ENCODE measurements at regions of chr6 and their contacts with region 1.

Region 1: DNA sequence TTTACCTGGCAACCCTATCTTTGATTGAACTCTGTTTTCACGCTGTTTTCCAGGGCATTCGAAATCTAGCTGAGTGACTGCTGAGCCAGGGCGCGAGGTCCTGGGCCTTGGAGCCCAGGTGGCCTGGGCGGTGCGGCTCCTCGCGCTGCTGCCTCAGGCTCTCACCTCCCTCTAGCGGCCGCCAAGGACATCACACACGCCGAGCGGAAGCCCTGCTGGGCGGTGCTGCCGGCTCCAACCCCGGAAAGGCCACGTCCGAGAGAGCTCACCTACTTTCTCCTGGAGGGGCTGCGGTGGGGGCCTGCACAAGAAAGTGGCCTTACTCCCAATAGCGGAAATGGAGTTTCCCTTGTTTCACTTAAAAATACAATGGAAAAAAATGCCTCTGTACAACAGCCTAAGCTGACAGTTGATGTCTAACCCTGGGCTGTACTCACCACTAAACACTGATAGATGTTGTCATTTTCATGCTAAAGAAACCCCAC is 77.7 kb downstream of the ELOVL4 start:
- DNase-seq: peak; percentile 89
- H3K4me3 Mint-ChIP-seq: peak overlapping the region; percentile 30
- H3K27ac Mint-ChIP-seq: no peak overlapping the region
- H3K4me1 Mint-ChIP-seq: peaks cover 16% of the 10 kb centered on the region
- H3K27me3 Mint-ChIP-seq: peaks cover 8% of the 10 kb centered on the region
- CTCF ChIP-seq: peak; percentile 88

Region 2: DNA sequence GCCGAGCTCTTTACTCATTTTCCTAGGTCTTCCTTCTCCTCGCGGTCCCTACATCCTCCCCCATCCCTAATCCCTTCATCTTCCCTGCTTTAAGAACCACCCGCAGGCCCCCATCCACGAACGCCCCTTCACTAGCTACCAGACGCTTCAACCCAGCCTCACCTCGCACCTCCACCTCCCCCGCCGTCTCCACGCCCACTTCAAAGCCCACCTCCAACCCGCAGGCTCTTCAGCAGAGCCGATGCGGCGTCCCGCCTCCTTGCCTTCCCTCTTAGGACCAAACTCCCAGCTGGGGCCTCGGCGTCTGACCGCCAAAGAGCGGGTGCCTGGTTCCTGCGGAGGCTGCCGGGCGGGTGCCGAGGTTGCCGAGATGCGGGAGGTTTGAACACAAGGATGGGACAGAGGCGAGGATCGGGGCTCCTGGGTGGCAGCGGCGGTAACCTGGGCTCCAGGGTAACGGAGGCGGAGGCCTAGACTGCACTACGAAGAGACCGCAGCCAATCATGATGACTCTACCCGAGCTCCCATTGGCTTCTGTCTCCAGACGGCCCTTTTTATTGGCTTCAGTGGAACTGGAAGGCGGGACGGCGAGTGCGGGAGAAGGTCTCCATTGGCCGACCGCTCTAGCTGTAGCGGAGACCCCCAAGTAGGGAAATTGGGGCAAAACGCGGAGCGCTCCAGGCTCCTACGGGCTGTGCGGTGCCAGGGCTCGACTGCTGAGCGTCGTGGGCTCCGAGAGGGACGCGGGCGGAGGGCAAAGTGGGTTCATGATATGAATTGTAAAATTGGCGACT is 332.5 kb before region 1 on chr6 and contains the start of gene LCA5:
- CTCF ChIA-PET with region 1: interaction called, 3 read pairs
- intact Hi-C with region 1: loop called (anchors 10 kb)
- DNase-seq: peak; percentile 92
- H3K4me3 Mint-ChIP-seq: no peak within 1 kb of the TSS
- H3K27ac Mint-ChIP-seq: no peak within 1 kb of the TSS
- H3K4me1 Mint-ChIP-seq: peaks cover 45% of the 10 kb centered on the region
- H3K27me3 Mint-ChIP-seq: no peaks in the 10 kb centered on the region
- CTCF ChIP-seq: no peak
- total RNA-seq, gene LCA5: 13.9 and 18.3 TPM in 2 replicates

Region 3: GRCh38 chr6:79762370-79762769 is 107.3 kb before region 1 on chr6:
- CTCF ChIA-PET with region 1: interaction called, 4 read pairs
- intact Hi-C with region 1: loop called (anchors 5 kb)
- DNase-seq: peak; percentile 13
- H3K4me3 Mint-ChIP-seq: no peak overlapping the region
- H3K27ac Mint-ChIP-seq: no peak overlapping the region
- H3K4me1 Mint-ChIP-seq: peaks cover 7% of the 10 kb centered on the region
- H3K27me3 Mint-ChIP-seq: no peaks in the 10 kb centered on the region
- CTCF ChIP-seq: peak; percentile 13

Region 4: GRCh38 chr6:79777713-79778579 is 91.7 kb before region 1 on chr6:
- CTCF ChIA-PET with region 1: interaction called, 8 read pairs
- intact Hi-C with region 1: loop called (anchors 1 kb)
- DNase-seq: peak; percentile 91
- H3K4me3 Mint-ChIP-seq: peak overlapping the region; percentile 64
- H3K27ac Mint-ChIP-seq: no peak overlapping the region
- H3K4me1 Mint-ChIP-seq: no peaks in the 10 kb centered on the region
- H3K27me3 Mint-ChIP-seq: no peaks in the 10 kb centered on the region
- CTCF ChIP-seq: peak; percentile 98

Region 5: DNA sequence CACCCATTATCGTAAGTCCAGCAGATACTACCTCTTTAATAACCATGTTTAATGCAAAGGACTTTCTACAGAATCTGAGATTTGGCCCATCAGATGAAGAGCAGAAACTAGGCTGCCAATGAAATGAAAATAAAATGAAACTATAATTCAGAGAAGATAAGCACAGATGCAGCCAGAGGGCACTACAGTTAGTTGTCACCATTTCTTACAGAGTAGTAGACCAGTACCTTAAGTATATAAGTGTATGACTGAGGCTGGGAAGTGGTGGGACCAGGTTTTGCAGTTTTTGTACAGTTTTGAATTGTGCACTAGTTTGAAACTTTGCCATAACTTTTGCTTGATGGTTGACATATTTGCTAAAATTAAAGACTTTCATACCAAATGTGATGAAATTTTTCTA is 14.5 kb before region 1 on chr6:
- CTCF ChIA-PET with region 1: no interaction called
- intact Hi-C with region 1: no loop called
- DNase-seq: no peak
- H3K4me3 Mint-ChIP-seq: no peak overlapping the region
- H3K27ac Mint-ChIP-seq: no peak overlapping the region
- H3K4me1 Mint-ChIP-seq: no peaks in the 10 kb centered on the region
- H3K27me3 Mint-ChIP-seq: no peaks in the 10 kb centered on the region
- CTCF ChIP-seq: no peak

Region 6: GRCh38 chr6:80094017-80094416 is 224.4 kb after region 1 on chr6:
- CTCF ChIA-PET with region 1: no interaction called
- intact Hi-C with region 1: loop called (anchors 5 kb)
- DNase-seq: peak; percentile 4
- H3K4me3 Mint-ChIP-seq: no peak overlapping the region
- H3K27ac Mint-ChIP-seq: no peak overlapping the region
- H3K4me1 Mint-ChIP-seq: no peaks in the 10 kb centered on the region
- H3K27me3 Mint-ChIP-seq: no peaks in the 10 kb centered on the region
- CTCF ChIP-seq: peak; percentile 38

Measured in Calu3 (cell line).